GM18951 (cell line): ENCODE measurements at regions of chr9 and their contacts with region 1.

Region 1: GRCh38 chr9:98998441-98999151 is 54.9 kb downstream of the COL15A1 start:
- POLR2A ChIP-seq: no peak

Region 2: GRCh38 chr9:98848450-98849149 is 150.0 kb before region 1 on chr9:
- in situ Hi-C with region 1: loop called (anchors 10 kb)
- POLR2A ChIP-seq: no peak

Region 3: DNA sequence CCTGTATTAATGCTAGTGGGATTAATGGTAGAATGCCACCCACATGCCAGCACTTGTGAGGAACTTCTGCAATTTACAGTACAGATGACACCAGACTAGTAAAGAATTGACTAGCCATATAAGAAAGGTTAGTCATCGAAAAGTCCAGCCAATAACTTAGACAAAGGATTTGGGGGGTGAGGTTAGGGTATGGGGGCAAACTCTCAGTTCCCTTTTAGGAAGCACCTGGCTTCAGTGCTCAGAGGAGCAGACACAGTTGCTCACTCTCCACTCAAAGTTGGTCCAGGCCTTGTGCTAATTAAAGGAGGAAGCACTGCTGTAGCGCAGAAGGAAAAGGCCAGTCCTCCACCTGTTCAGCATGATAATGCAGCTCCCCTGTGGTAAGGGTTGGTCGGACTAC is 131.5 kb after region 1 on chr9:
- in situ Hi-C with region 1: loop called (anchors 10 kb)
- POLR2A ChIP-seq: no peak